PC-9 (cell line): ENCODE measurements at regions of chr1 and their contacts with region 1.

Region 1: GRCh38 chr1:168623003-168623828 is 46.8 kb downstream of the XCL1 start:
- DNase-seq: peak; percentile 61 to 89
- H3K4me3 ChIP-seq: no peak overlapping the region
- H3K27ac ChIP-seq: peak overlapping the region; percentile 43
- H3K4me1 ChIP-seq: peaks cover 14% of the 10 kb centered on the region; the same call in 1 of the 2 replicates
- H3K27me3 ChIP-seq: no peaks in the 10 kb centered on the region
- CTCF ChIP-seq: no peak

Region 2: GRCh38 chr1:168907053-168907452 is 283.8 kb after region 1 on chr1:
- CTCF ChIA-PET with region 1: interaction called, 3 read pairs
- POLR2A ChIA-PET with region 1: no interaction called
- intact Hi-C with region 1: loop called (anchors 10 kb)
- DNase-seq: peak; percentile 52 to 97
- H3K4me3 ChIP-seq: peak overlapping the region; percentile 27; the same call in 1 of the 2 replicates
- H3K27ac ChIP-seq: peak overlapping the region; percentile 91
- H3K4me1 ChIP-seq: peaks cover 37% of the 10 kb centered on the region
- H3K27me3 ChIP-seq: no peaks in the 10 kb centered on the region
- CTCF ChIP-seq: no peak

Region 3: DNA sequence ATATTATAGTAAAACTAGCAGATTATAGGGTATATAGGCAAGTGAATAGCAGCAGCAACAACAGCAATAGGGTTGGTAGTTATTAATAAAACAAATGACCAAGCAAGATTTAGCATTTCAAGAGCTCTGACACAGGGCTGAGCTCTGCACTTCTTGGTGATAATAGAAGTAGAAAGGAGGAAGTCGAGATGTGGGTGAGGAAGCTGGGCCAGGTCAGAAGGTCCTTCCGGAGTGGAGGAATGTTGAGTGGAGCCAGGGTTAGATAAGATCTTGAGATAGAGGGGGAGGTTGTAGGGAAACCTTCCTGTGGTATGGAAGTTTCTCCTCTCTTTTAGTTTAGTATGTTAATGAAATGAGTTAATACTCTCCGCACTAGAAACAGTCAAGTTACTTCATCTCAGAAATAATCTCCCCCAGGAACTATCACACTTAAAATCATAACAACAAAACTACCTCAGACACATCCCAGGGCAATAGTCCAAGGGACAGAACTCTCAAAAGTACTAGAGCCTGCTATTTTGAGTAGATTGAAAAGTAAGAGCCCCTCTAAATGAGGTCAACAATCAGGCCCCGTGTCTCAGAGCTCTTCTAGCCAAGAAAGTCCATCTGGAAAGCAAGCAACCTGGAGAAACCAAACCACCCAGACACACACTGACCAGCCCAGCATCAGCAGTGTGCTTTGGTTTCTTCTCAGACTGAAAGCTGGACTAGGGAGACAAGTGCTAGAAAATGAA is 437.9 kb after region 1 on chr1:
- CTCF ChIA-PET with region 1: no interaction called
- POLR2A ChIA-PET with region 1: no interaction called
- intact Hi-C with region 1: loop called (anchors 5 kb)
- DNase-seq: peak in 1 of 2 experiments; percentile 81
- H3K4me3 ChIP-seq: peak overlapping the region; percentile 27; the same call in 1 of the 2 replicates
- H3K27ac ChIP-seq: peak overlapping the region; percentile 92
- H3K4me1 ChIP-seq: peaks cover 49% of the 10 kb centered on the region
- H3K27me3 ChIP-seq: no peaks in the 10 kb centered on the region
- CTCF ChIP-seq: no peak